Thyroid gland (tissue), 4 donors: ENCODE measurements at regions of chr4 and their contacts with region 1.

Region 1: DNA sequence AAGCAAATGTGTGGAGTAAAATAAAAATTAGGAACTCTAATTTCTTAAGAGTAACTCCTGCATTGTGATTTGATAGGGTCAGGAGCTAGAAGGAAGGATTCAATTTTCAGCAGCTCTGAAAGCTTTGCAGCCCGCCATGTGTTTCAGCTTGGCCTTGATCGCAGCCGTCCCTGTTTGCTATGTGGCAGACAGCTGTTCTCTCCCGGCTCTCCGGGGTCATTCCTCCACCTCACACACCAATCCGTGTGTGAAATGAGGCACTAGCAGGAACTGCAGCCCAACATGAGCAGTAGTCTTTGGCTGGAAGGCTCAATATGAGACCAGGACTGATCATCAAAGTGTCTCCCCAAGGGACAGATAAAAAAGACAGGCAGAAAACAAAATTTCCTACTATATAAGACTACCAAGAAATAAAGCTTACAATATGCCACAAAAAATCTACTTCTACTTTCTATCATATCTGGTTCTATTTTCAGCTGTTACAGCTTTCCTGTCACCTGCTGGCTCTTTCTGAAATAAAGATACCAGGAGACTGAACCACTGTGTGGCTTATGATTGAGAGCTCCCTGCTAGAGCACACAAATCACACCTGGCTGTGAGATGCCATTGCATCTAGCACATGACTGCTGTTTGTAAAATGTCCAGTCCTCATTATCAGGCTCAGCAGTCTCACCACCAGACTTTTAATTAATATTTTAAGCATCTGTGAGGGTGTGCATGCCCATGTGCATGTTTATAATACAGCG is 44.1 kb upstream of the SEC24B start:
- DNase-seq: no peak
- H3K4me3 ChIP-seq: no peak overlapping the region
- H3K27ac ChIP-seq: peak overlapping the region in 1 of 3 donors; percentile 59
- H3K4me1 ChIP-seq: peaks cover 32 to 40% of the 10 kb centered on the region in 2 donors
- H3K27me3 ChIP-seq: no peaks in the 10 kb centered on the region
- CTCF ChIP-seq: no peak
- POLR2A ChIP-seq: no peak

Region 2: DNA sequence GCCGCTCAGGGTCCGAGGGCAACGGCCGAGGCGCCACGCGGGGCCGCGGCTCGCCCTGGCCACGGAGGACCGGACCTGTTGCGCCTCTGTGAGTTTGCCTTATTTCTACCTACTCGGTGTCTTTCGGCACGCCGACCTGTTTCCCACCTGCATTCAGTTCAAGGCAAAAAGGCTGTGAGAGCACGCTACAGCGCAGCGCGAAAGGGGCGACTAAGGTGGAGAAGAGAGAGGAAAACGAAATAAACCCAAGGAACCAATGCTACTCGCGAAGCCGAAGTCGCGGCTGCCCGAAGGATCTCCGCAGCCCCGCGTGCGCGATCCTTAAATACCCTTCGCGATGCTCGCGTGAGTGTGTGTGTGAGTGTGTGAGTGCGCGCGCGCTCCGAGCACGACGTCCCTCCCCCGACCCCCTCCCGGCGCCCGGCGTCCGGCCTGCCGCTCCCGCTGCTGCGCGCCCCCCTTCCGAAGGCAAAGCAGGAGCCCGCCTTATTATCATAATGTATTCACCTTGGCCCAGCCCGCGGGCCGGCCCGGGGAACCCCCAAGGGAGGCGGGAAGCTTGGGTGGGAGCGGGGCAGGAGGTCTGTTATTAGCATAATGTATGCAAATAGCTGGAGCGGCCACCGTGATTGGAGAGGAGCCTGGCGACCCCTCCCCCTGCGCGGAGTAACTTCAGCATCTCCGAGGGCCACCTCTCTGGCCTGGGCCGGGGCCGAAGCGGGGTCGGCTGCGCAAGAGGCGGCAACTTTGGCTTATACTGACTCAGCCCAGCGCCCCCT is 87.0 kb before region 1 on chr4 and contains the start of gene COL25A1:
- intact Hi-C with region 1: loop called (anchors 10 kb)
- DNase-seq: peak; percentile 90 to 94
- H3K4me3 ChIP-seq: peak within 1 kb of the TSS; percentile 36 to 63 (median 38)
- H3K27ac ChIP-seq: peak within 1 kb of the TSS; percentile 55 to 73 (median 59)
- H3K4me1 ChIP-seq: peaks cover 9 to 14% of the 10 kb centered on the region in 2 donors
- H3K27me3 ChIP-seq: no peaks in the 10 kb centered on the region
- CTCF ChIP-seq: no peak
- POLR2A ChIP-seq: peak in 1 of 2 donors; percentile 63
- total RNA-seq, gene COL25A1: 5.5 to 21.0 (median 7.1) TPM